Transverse colon (tissue), 4 donors: ENCODE measurements at regions of chr15 and their contacts with region 1.

Region 1: GRCh38 chr15:25438601-25439368 is at the start of gene UBE3A:
- DNase-seq: peak; percentile 93
- H3K4me3 ChIP-seq: peak within 1 kb of the TSS; percentile 84 to 100 (median 96)
- H3K27ac ChIP-seq: peak within 1 kb of the TSS; percentile 98 to 100 (median 99)
- H3K4me1 ChIP-seq: peaks cover 23 to 39% (median 35%) of the 10 kb centered on the region in 4 donors
- H3K27me3 ChIP-seq: no peaks in the 10 kb centered on the region
- CTCF ChIP-seq: peak in 2 of 5 experiments; percentile 16 to 19
- EP300 ChIP-seq: no peak
- POLR2A ChIP-seq: peak; percentile 78
- total RNA-seq, gene UBE3A: 52.1 to 92.1 (median 76.5) TPM

Region 2: DNA sequence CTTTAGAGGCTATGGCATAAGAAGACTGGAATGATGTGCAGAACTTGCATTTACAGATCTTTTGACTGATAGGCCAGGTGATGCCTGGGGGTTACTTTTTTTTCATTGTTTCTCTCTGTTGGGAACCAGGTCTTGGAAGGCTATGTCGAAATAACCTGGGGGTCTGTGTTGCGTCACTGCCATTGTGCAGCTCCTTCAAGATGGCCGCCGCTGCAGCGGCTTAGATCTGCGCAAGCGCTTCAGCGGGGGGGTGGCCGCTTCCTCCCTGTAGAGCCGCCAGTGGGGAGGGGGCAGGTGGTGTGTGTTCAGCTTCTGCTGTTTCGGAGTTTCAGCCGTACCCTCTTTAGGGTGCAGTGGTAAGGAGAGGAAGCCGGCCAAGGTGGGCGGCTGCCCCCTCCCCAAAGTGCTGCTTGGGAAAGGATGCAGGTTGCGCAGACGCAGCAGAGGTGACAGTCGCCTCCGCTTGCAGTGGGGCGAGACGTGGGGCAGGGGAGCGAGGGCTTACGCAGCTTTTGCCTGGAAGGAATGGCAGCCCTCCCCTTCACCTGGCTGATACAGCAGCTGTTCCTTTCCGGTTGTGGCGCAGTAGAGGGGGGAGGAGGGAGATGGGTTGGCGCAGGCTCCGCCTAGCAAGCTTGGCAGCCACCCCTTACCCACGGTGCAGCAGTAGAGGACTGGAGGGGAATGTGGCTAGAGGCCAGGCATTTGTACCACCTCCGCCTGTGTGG is 482.5 kb before region 1 on chr15:
- in situ Hi-C with region 1: loop called in 1 of 4 experiments (anchors 25 kb)
- intact Hi-C with region 1: no loop called
- DNase-seq: peak; percentile 78
- H3K4me3 ChIP-seq: peak overlapping the region; percentile 53 to 75 (median 64)
- H3K27ac ChIP-seq: peak overlapping the region; percentile 85 to 92 (median 86)
- H3K4me1 ChIP-seq: no peaks in the 10 kb centered on the region
- H3K27me3 ChIP-seq: no peaks in the 10 kb centered on the region
- CTCF ChIP-seq: no peak
- EP300 ChIP-seq: no peak
- POLR2A ChIP-seq: peak; percentile 49

Region 3: GRCh38 chr15:25208735-25209134 is 230.1 kb before region 1 on chr15:
- in situ Hi-C with region 1: no loop called
- intact Hi-C with region 1: no loop called
- DNase-seq: no peak
- H3K4me3 ChIP-seq: no peak overlapping the region
- H3K27ac ChIP-seq: no peak overlapping the region
- H3K4me1 ChIP-seq: no peaks in the 10 kb centered on the region
- H3K27me3 ChIP-seq: no peaks in the 10 kb centered on the region
- CTCF ChIP-seq: no peak
- EP300 ChIP-seq: no peak
- POLR2A ChIP-seq: no peak

Region 4: DNA sequence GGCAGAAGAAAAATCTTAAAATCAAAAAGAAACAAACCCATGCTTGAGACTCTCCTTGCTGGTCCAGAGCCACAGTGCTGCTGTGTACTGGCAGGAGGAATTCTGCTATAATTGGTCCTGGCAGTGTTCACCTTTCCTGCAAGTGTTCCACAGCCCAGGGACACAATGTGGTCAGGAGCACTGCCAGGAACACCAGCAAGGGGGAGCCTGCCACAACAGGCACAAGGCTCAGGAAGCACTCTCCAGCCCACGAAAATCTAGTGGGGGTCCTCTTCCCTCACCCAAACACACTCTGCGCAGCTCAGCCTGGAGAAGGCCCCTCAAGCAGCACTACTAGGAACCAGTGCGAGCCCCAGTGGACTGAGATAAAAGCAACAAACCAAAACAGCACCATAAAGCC is 92.8 kb before region 1 on chr15:
- in situ Hi-C with region 1: no loop called
- intact Hi-C with region 1: loop called (anchors 10 kb)
- DNase-seq: no peak
- H3K4me3 ChIP-seq: no peak overlapping the region
- H3K27ac ChIP-seq: no peak overlapping the region
- H3K4me1 ChIP-seq: no peaks in the 10 kb centered on the region
- H3K27me3 ChIP-seq: no peaks in the 10 kb centered on the region
- CTCF ChIP-seq: peak in 1 of 5 experiments; percentile 14
- EP300 ChIP-seq: no peak
- POLR2A ChIP-seq: no peak

Region 5: GRCh38 chr15:25456196-25456595 is 17.4 kb after region 1 on chr15:
- in situ Hi-C with region 1: no loop called
- intact Hi-C with region 1: no loop called
- DNase-seq: no peak
- H3K4me3 ChIP-seq: no peak overlapping the region
- H3K27ac ChIP-seq: no peak overlapping the region
- H3K4me1 ChIP-seq: no peaks in the 10 kb centered on the region
- H3K27me3 ChIP-seq: no peaks in the 10 kb centered on the region
- CTCF ChIP-seq: no peak
- EP300 ChIP-seq: no peak
- POLR2A ChIP-seq: no peak

Region 6: GRCh38 chr15:26082221-26083109 is 643.7 kb after region 1 on chr15:
- in situ Hi-C with region 1: loop called in 1 of 4 experiments (anchors 25 kb)
- intact Hi-C with region 1: no loop called
- DNase-seq: peak; percentile 94
- H3K4me3 ChIP-seq: peak overlapping the region; percentile 53 to 75 (median 67)
- H3K27ac ChIP-seq: peak overlapping the region; percentile 87 to 95 (median 92)
- H3K4me1 ChIP-seq: peaks cover 0 to 10% (median 0%) of the 10 kb centered on the region in 4 donors
- H3K27me3 ChIP-seq: no peaks in the 10 kb centered on the region
- CTCF ChIP-seq: peak in 2 of 5 experiments; percentile 17 to 22
- EP300 ChIP-seq: no peak
- POLR2A ChIP-seq: peak; percentile 65